ENCODE measurements at regions of chrX and their contacts with region 1.

Region 1: DNA sequence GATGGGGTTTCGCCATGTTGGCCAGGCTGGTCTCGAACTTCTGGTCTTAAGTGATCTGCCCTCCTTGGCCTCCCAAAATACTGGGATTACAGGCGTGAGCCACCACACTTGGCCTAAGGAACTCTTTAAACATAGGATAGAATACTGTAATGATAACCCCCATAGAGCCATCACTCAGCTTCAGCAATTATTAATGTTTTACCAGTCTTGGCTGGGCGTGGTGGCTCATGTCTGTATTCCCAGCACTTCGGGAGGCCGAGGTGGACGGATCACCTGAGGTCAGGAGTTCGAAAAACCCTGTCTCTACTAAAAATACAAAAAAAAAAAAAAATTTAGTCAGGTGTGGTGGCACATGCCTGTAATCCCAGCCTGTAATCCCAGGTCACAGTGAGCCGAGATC is 15.1 kb downstream of the EIF2S3 start:
- DNase-seq: no peak
- H3K4me3 ChIP-seq: no peak overlapping the region
- H3K27ac ChIP-seq: no peak overlapping the region
- H3K4me1 ChIP-seq: no peaks in the 10 kb centered on the region
- H3K27me3 ChIP-seq: no peaks in the 10 kb centered on the region
- CTCF ChIP-seq: no peak

Region 2: DNA sequence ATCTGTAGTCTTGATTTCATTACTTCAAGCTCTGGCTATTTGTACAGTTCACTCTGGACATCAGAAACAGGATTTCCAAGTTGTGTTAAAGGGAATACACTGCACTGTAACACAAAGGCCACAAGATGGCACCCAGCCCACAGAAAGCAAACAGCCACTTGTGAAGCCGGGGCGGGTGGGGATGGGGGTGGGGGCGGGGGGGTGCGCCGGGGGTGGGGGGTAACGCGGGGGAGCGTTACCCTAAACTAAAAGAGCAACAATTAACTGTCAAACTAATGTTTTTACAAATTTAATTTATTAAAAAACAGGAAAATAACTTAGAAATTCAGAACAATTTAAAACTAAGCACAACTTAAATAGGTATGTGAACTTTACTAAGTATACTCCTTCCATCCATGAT is 375.3 kb before region 1 on chrX:
- CTCF ChIA-PET with region 1: interaction called, 10 read pairs
- POLR2A ChIA-PET with region 1: no interaction called
- intact Hi-C with region 1: no loop called
- DNase-seq: peak; percentile 38 to 43
- H3K4me3 ChIP-seq: no peak overlapping the region
- H3K27ac ChIP-seq: no peak overlapping the region
- H3K4me1 ChIP-seq: no peaks in the 10 kb centered on the region
- H3K27me3 ChIP-seq: no peaks in the 10 kb centered on the region
- CTCF ChIP-seq: peak; percentile 49

Region 3: GRCh38 chrX:24167719-24168472 is 98.0 kb after region 1 on chrX:
- CTCF ChIA-PET with region 1: no interaction called
- POLR2A ChIA-PET with region 1: interaction called, 13 read pairs
- intact Hi-C with region 1: no loop called
- DNase-seq: no peak
- H3K4me3 ChIP-seq: no peak overlapping the region
- H3K27ac ChIP-seq: no peak overlapping the region
- H3K4me1 ChIP-seq: no peaks in the 10 kb centered on the region
- H3K27me3 ChIP-seq: no peaks in the 10 kb centered on the region
- CTCF ChIP-seq: no peak

Region 4: DNA sequence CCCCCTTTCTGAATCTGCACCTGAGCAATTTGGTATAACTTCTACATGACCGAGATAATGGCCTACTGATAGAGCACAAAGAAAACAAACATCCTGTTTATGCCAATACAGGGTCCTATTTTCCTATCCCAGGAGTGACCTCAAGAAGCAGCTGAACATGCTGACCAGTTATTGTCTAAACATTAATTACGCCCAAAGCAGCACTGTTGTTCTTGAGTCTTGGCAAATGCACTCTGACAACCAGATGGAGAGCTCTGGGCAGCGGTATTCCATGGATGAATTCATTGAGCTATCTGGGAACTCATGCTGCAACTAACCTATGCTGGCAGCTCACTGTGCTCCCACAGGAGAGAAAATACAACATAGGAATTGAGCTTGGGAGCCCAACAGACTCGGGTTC is 524.6 kb after region 1 on chrX:
- CTCF ChIA-PET with region 1: no interaction called
- POLR2A ChIA-PET with region 1: no interaction called
- intact Hi-C with region 1: no loop called
- DNase-seq: no peak
- H3K4me3 ChIP-seq: no peak overlapping the region
- H3K27ac ChIP-seq: no peak overlapping the region
- H3K4me1 ChIP-seq: no peaks in the 10 kb centered on the region
- H3K27me3 ChIP-seq: no peaks in the 10 kb centered on the region
- CTCF ChIP-seq: no peak

Measured in PC-9 (cell line).